ENCODE measurements at regions of chr19 and their contacts with region 1.

Region 1: DNA sequence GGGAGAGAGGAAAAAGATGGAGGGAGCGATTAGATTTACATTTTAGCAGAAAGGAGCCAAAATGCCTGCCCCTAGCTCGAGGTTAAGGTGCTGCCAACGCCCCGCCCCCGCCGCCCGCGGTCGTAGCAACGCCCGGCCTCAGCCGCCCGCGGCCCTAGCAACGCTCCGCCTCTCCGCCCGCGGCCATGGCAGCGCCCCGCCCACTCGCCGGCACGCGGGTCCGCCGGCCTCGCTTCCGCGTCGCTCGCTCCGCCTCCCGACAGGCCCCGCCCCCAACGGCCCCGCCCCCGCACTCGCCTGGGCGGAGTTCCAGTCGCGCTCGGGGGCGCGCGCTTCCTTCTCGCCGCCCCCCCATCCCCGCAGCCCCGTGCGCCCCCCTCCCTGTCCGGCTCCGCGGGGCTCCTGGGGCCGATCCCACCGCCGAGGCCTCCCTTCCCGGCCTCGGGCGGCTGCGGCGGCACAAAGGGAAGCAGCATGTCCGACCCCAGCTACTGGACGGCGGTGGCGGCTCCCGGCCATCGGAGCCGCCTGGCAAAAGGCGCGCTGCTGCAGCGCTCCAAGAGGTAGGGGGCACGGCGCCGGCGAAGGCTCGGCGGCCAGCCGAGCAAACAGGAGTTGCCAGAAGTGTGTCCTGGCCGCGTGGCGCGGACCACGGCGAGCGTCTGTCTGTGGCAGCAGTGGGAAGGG is 20.3 kb downstream of the MAST3 start:
- DNase-seq: peak; percentile 92 to 97 (median 96)
- H3K4me3 ChIP-seq: peak overlapping the region; percentile 63 to 64
- H3K4me3 Mint-ChIP-seq: peak overlapping the region; percentile 88 to 98 (median 95)
- H3K27ac ChIP-seq: peak overlapping the region; percentile 85
- H3K27ac Mint-ChIP-seq: peak overlapping the region; percentile 89 to 99 (median 96)
- H3K4me1 ChIP-seq: peaks cover 44% of the 10 kb centered on the region
- H3K4me1 Mint-ChIP-seq: peaks cover 18 to 45% (median 31%) of the 10 kb centered on the region in 4 donors
- H3K27me3 ChIP-seq: no peaks in the 10 kb centered on the region
- H3K27me3 Mint-ChIP-seq: no peaks in the 10 kb centered on the region

Region 2: DNA sequence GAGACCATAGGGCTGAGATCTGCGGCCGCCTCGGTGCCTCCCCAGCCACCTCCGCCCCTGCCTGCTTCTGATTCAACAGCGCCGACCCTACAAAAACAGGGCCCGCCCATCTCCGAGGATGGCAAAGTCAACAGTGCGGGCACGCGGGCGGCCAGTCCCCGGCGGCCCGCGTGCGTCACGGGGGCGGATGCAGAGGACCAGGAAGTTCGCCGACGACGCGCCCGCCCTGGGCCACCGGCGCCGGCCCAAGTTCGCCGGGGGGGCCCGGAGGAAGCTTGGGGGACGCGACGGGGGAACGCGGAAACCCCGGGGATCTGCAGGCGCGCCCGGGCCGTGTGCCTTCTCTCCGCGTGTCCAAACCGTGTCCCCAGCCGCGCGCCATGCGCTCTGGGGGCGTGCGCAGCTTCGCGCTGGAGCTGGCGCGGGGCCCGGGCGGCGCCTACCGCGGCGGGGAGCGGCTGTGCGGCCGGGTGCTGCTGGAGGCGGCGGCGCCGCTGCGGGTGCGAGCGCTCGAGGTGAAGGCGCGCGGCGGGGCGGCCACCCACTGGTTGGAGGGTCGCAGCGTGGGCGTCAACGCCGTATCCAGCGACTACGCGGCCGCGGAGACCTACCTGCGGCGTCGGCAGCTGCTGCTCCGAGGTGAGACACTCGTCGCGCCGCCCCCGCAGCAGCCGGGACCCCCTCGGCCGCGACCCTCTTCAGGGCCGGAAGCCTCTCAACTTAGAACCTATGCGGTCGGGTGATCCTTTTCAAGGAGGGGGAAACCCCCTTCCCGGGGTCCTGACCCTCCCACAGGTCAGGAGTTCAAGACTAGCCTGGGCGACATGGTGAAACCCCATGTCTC is 116.7 kb before region 1 on chr19:
- CTCF ChIA-PET with region 1: interaction called, 4 read pairs
- POLR2A ChIA-PET with region 1: interaction called, 28 read pairs
- intact Hi-C with region 1: loop called (anchors 2 kb)
- DNase-seq: peak; percentile 96 to 98 (median 97)
- H3K4me3 ChIP-seq: peak overlapping the region; percentile 76 to 86
- H3K4me3 Mint-ChIP-seq: peak overlapping the region; percentile 88 to 96 (median 92)
- H3K27ac ChIP-seq: peak overlapping the region; percentile 88
- H3K27ac Mint-ChIP-seq: peak overlapping the region; percentile 93 to 100 (median 100)
- H3K4me1 ChIP-seq: peaks cover 33% of the 10 kb centered on the region
- H3K4me1 Mint-ChIP-seq: peaks cover 10 to 41% (median 24%) of the 10 kb centered on the region in 4 donors
- H3K27me3 ChIP-seq: no peaks in the 10 kb centered on the region
- H3K27me3 Mint-ChIP-seq: no peaks in the 10 kb centered on the region

Region 3: GRCh38 chr19:18091217-18091608 is 26.6 kb before region 1 on chr19:
- CTCF ChIA-PET with region 1: interaction called, 36 read pairs
- POLR2A ChIA-PET with region 1: interaction called, 159 read pairs
- intact Hi-C with region 1: no loop called
- DNase-seq: peak; percentile 81 to 91 (median 83)
- H3K4me3 ChIP-seq: peak overlapping the region in 1 of 2 donors; percentile 16
- H3K4me3 Mint-ChIP-seq: peak overlapping the region in 7 of 8 donors; percentile 68 to 83 (median 75)
- H3K27ac ChIP-seq: peak overlapping the region; percentile 85
- H3K27ac Mint-ChIP-seq: peak overlapping the region; percentile 98 to 100 (median 99)
- H3K4me1 ChIP-seq: peaks cover 68% of the 10 kb centered on the region
- H3K4me1 Mint-ChIP-seq: peaks cover 39 to 76% (median 55%) of the 10 kb centered on the region in 4 donors
- H3K27me3 ChIP-seq: no peaks in the 10 kb centered on the region
- H3K27me3 Mint-ChIP-seq: no peaks in the 10 kb centered on the region

Region 4: DNA sequence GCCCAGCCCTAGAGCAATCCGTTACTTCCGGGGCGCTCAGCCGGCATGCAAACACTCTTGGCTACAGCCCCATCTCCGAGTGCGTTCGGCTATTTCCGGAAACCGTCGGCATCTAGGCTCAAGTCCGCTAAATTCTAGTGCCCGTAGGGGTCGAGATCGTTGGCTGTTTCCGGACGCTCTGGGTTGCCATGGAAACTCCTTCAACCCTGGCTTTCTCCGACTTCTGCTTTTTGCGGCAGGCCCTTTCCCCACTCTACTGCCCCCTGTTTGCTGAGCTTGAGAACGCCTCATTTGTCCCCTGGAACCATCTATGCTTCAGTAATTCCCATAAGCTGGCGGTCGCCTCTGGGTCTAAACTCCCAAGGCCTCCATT is 34.6 kb after region 1 on chr19:
- CTCF ChIA-PET with region 1: interaction called, 38 read pairs
- POLR2A ChIA-PET with region 1: interaction called, 85 read pairs
- intact Hi-C with region 1: loop called (anchors 1 kb)
- DNase-seq: peak; percentile 96 to 99 (median 96)
- H3K4me3 ChIP-seq: peak overlapping the region; percentile 74 to 79
- H3K4me3 Mint-ChIP-seq: peak overlapping the region; percentile 84 to 95 (median 91)
- H3K27ac ChIP-seq: peak overlapping the region; percentile 74
- H3K27ac Mint-ChIP-seq: peak overlapping the region; percentile 88 to 99 (median 97)
- H3K4me1 ChIP-seq: peaks cover 28% of the 10 kb centered on the region
- H3K4me1 Mint-ChIP-seq: peaks cover 14 to 38% (median 21%) of the 10 kb centered on the region in 4 donors
- H3K27me3 ChIP-seq: no peaks in the 10 kb centered on the region
- H3K27me3 Mint-ChIP-seq: no peaks in the 10 kb centered on the region

Region 5: GRCh38 chr19:18173572-18174288 is 55.9 kb after region 1 on chr19 and contains the start of gene IFI30:
- CTCF ChIA-PET with region 1: interaction called, 125 read pairs
- POLR2A ChIA-PET with region 1: interaction called, 3 read pairs
- intact Hi-C with region 1: loop called (anchors 1 kb)
- DNase-seq: peak; percentile 45 to 56 (median 51)
- H3K4me3 ChIP-seq: peak within 1 kb of the TSS; percentile 73 to 77
- H3K4me3 Mint-ChIP-seq: peak within 1 kb of the TSS; percentile 88 to 96 (median 91)
- H3K27ac ChIP-seq: peak within 1 kb of the TSS; percentile 62
- H3K27ac Mint-ChIP-seq: peak within 1 kb of the TSS; percentile 64 to 93 (median 85)
- H3K4me1 ChIP-seq: peaks cover 18% of the 10 kb centered on the region
- H3K4me1 Mint-ChIP-seq: peaks cover 3 to 20% (median 9%) of the 10 kb centered on the region in 4 donors
- H3K27me3 ChIP-seq: no peaks in the 10 kb centered on the region
- H3K27me3 Mint-ChIP-seq: no peaks in the 10 kb centered on the region
- total RNA-seq, gene IFI30: 48.3 to 56.9 TPM

Region 6: GRCh38 chr19:18322759-18323460 is 205.1 kb after region 1 on chr19 and contains the start of gene LSM4:
- CTCF ChIA-PET with region 1: no interaction called
- POLR2A ChIA-PET with region 1: interaction called, 4 read pairs
- intact Hi-C with region 1: loop called (anchors 5 kb)
- DNase-seq: peak; percentile 99 to 100 (median 99)
- H3K4me3 ChIP-seq: peak within 1 kb of the TSS; percentile 61 to 81
- H3K4me3 Mint-ChIP-seq: peak within 1 kb of the TSS; percentile 75 to 88 (median 86)
- H3K27ac ChIP-seq: peak within 1 kb of the TSS; percentile 68
- H3K27ac Mint-ChIP-seq: peak within 1 kb of the TSS; percentile 86 to 98 (median 97)
- H3K4me1 ChIP-seq: peaks cover 59% of the 10 kb centered on the region
- H3K4me1 Mint-ChIP-seq: peaks cover 32 to 59% (median 45%) of the 10 kb centered on the region in 4 donors
- H3K27me3 ChIP-seq: no peaks in the 10 kb centered on the region
- H3K27me3 Mint-ChIP-seq: no peaks in the 10 kb centered on the region
- total RNA-seq, gene LSM4: 64.2 to 65.0 TPM